Activated CD8-positive, alpha-beta T cell treated with anti-CD3 and anti-CD28 coated beads, Interleukin-2, amount 10 ng/mL, durations not matched to agents 7 days and 5 days (primary cell): ENCODE measurements at regions of chr3 and their contacts with region 1.

Region 1: DNA sequence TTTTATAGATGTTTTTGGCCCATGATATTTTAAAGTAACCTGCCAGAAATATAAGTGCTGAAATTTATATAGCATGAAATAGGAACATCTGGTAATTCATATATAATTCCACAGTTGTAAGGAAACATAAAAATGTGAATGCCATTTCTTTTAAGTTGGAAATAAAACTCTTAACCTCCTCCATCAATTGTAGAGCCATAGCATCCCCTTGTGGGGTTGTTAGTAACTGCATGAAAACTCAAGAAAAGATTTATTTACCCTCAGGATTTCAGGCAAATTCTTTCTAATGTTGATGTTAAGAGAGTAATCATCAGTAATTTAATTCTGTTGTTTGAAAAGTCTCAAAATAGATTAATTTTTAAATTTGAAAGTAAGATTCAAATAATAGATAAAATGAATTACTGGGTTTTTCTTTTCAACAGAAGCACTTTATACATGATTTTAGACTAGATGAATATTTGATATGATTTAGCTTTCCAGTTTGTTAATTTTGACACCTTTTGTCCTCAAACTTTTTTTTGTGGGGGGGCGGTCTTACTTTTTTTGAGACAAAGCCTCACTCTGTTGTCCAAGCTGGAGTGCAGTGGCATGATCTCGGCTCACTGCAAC is 74.7 kb downstream of the RASA2 start:
- DNase-seq: peak; percentile 69
- ATAC-seq: peak; percentile 60
- H3K4me3 Mint-ChIP-seq: no peak overlapping the region
- H3K27ac Mint-ChIP-seq: no peak overlapping the region
- H3K4me1 Mint-ChIP-seq: peaks cover 22% of the 10 kb centered on the region
- H3K27me3 Mint-ChIP-seq: no peaks in the 10 kb centered on the region

Region 2: DNA sequence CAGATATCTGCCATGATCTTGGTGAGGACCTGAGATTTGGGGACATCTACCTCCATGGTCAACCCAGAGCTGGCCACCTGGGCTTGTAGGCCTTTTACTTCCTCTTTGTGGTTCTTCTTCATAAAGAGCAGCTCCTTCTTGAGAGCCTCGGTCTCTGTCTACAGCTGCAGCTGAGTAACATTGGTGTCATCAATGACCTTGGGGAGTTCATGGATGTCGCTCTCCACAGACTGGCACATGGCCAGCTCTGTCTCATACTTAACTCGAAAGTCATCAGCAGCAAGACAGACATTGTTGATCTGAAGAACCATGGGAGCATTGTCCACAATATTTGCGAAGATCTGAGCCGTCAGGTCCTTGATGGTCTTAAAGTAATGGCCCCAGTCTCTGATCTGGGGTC is 90.4 kb before region 1 on chr3:
- CTCF ChIA-PET with region 1: interaction called, 93 read pairs
- POLR2A ChIA-PET with region 1: no interaction called
- DNase-seq: no peak
- ATAC-seq: no peak
- H3K4me3 Mint-ChIP-seq: no peak overlapping the region
- H3K27ac Mint-ChIP-seq: no peak overlapping the region
- H3K4me1 Mint-ChIP-seq: peaks cover 19% of the 10 kb centered on the region
- H3K27me3 Mint-ChIP-seq: peaks cover 11% of the 10 kb centered on the region

Region 3: DNA sequence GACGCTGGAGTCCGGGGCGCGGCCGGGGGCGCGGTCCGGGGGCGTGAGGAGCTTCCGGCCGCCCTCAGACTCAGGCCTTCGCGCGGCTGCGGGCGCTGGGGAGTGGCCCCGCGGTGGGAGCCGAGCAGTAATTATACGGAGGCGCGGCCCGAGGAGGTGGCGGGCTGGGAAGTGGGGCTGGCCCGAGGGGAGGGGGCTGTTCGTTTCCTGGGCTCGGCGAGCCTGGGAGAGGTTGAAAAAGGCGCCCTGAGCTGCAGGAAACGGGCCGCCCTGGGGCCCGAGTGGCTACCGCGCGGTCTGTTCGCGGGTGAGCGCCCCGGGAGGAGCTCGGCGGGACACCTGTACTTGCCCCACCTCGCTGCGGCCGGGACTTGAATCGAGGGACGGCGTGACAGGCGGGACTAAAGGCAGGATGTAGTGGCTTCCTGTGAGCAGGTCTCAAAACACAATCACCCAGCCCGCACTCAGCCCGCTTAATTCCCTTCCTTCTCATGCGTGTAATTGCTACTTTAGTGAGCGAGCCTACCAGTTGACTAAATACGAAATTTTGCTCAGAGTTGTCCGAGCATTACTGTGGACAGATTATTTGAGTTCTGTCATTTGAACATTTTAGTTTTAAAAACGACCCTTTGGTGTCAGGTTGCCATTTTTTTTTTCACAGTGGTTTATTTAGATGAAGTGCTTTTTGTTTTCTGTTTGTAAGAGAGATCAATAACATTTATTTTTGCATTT is 73.8 kb before region 1 on chr3:
- CTCF ChIA-PET with region 1: interaction called, 30 read pairs
- POLR2A ChIA-PET with region 1: interaction called, 3 read pairs
- DNase-seq: peak; percentile 96
- ATAC-seq: peak; percentile 78
- H3K4me3 Mint-ChIP-seq: peak overlapping the region; percentile 88
- H3K27ac Mint-ChIP-seq: peak overlapping the region; percentile 96
- H3K4me1 Mint-ChIP-seq: peaks cover 74% of the 10 kb centered on the region
- H3K27me3 Mint-ChIP-seq: no peaks in the 10 kb centered on the region

Region 4: DNA sequence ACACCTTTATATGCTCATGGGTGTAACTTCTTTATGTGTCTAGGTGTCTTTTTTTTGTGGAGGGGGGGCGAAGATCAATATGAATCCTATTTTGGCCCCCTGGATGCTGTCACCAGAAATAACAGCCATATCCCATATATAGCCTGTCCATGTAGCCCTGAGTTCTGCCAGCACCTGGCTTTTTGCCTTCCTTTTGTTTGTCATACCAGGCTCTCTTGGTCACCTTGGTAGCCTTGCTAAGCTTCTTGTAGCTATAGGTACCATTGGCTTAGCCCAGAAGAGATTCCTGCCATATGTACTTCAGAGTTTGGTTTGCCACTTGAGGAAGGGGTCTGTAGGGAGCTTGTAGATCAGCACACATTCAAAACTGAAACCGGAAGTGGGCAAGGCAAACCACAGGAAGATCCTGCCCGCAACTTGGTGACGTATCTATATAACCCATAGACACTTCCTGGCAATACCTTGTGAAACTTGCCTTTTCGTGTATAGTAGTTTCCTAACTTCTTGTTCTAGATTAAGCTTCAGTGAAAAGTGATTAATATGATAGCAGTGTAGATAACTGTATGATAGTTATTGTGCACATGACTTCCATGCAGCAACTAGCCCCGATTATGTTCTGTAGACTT is 62.8 kb before region 1 on chr3:
- CTCF ChIA-PET with region 1: interaction called, 25 read pairs
- POLR2A ChIA-PET with region 1: no interaction called
- DNase-seq: peak; percentile 96
- ATAC-seq: peak; percentile 85
- H3K4me3 Mint-ChIP-seq: peak overlapping the region; percentile 73
- H3K27ac Mint-ChIP-seq: peak overlapping the region; percentile 95
- H3K4me1 Mint-ChIP-seq: peaks cover 78% of the 10 kb centered on the region
- H3K27me3 Mint-ChIP-seq: no peaks in the 10 kb centered on the region

Region 5: GRCh38 chr3:141669434-141669833 is 107.9 kb after region 1 on chr3:
- CTCF ChIA-PET with region 1: no interaction called
- POLR2A ChIA-PET with region 1: no interaction called
- DNase-seq: no peak
- ATAC-seq: no peak
- H3K4me3 Mint-ChIP-seq: no peak overlapping the region
- H3K27ac Mint-ChIP-seq: no peak overlapping the region
- H3K4me1 Mint-ChIP-seq: no peaks in the 10 kb centered on the region
- H3K27me3 Mint-ChIP-seq: peaks cover 23% of the 10 kb centered on the region